ENCODE measurements at regions of chr1 and their contacts with region 1.

Region 1: DNA sequence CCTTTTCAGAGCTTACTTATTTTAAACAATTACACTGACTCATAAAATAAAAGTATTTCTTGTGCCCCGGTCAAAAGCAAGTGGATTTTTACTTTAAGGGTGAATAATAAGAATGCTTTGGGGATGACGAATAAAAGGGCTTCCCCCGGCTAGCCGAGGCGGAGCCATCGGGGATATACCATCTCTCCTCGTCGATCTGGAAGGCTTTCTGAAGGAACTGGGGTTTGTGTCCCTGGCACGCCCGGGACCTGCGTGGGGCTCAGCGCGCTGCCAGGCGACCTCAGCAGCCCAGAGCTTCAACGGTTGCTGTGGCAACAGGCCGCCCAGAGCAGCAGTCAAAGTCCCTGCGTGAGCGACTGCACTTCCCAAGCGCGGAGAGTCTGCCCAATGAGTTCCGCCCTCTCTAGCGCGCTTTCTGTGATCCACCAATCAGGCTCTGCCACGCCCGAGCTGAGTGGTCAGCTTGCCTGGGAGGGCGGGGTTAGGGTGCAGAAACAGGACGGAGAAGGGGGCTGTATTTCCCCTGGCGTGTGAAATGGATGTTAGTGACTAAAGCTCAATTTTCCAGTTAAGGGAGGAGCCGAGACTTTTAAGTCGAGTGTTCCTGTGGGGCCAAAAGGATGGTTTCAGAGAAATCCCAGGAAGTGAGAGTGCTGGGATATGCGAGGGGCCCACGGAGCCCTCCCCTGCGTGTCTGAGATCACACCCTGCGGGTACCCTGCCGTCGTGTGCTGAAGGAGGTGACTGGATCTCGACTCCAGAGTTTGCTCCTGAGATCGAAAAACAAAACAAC is 33.0 kb upstream of the MGST3 start:
- ATAC-seq: peak; percentile 96 to 100 (median 99)
- H3K4me3 ChIP-seq: peak overlapping the region; percentile 41 to 54 (median 46)
- H3K27ac ChIP-seq: peak overlapping the region; percentile 52 to 53
- H3K4me1 ChIP-seq: peaks cover 4 to 9% of the 10 kb centered on the region in 2 donors

Region 2: DNA sequence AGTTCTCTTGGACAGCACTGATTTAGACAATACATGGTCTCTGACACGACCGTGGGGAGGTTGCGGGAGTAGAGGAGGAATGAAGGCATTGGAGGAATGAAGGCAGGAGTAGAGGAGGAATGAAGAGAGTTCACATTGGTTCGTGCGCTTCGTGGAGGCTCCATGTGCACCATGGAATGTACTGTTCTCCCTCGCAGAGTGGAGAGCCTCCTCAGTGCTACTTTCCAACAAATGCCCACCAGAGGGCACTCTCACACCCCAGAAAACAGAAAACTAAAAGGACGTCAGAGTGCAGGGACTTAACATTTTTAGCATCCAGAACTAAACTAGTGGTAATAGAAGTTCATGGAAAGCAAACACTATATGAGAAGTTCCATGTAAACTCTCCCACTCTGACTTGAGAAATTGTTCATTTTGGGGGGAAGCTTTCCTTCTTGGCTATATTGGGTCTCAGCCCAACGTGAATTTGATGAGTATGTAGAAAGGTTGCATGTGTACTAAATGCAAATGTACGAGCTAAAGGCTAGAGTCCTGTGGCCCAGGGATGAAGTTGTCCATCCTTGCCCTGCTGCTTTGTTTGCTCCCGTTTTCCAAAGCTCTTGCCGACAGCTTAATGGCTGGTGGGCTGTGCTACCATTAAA is 453.2 kb before region 1 on chr1:
- in situ Hi-C with region 1: loop called in 4 of 9 experiments (anchors 25 kb)
- ATAC-seq: peak; percentile 83 to 100 (median 90)
- H3K4me3 ChIP-seq: no peak overlapping the region
- H3K27ac ChIP-seq: no peak overlapping the region
- H3K4me1 ChIP-seq: no peaks in the 10 kb centered on the region

Region 3: DNA sequence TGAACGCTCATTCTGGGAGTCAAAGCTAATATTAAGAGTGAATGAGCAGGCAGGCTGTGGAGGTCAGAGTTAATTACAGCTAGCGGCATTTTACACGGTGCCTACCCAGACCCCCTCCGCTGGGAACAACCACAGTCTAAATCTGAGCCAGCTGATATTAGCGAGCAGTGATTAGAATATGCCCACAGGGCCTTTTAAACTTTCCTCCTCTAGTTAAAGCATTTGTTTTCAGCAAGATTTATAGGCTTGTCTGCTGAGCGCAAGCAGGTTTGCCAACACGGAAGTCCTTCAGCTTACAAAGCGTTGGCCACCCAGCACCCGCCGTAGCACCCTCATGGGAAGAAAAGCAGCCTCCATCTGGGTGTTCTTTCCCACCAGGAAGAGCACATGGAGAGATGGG is 313.6 kb before region 1 on chr1:
- in situ Hi-C with region 1: no loop called
- ATAC-seq: peak in 1 of 8 experiments; percentile 35
- H3K4me3 ChIP-seq: no peak overlapping the region
- H3K27ac ChIP-seq: no peak overlapping the region
- H3K4me1 ChIP-seq: peaks cover 40 to 46% of the 10 kb centered on the region in 2 donors

Region 4: DNA sequence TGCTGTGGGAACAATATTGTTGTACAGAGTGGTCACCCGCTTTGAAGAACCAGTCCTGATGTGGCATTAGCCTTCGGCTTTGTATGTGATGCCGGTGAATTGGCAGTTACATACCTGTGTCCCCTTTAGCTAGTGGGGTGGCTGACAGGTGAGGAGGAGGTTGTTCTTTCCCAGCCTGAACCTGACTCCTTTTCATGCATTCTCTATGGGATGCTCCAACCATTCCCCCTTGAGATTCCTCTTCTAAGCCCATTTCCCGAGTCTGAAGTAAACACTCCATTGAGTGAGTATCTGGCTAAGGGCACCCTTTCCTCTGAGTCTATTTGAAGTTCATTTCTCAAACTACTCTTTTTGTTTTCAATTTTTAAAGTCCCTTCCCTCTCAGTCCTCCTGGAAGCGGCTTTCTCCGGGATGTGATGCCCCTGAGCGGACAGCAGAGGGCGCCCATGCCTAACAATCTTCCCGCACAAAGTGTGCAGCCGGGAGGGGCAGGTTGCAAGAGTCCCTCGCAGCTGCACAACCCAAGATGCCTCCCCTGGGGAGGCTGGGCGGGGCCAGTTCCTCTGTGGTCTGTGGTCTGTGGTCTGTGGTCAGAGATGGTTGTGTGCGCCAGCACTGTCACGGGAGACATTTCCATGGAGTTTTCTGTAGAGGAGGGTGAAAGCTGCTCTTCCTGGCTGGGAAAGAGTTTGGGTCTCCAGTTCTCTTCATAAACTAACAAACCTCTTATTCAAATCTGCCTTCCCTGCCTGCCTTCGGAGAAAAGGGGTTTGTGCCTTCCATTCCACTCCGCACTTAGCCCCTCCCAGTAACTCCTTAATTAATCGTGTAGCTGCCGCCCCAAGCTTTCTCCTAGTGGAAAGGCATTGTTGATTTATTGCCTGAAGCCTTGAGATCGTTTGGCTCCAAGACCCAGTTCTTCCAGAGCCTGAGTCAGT is 205.2 kb before region 1 on chr1:
- in situ Hi-C with region 1: loop called in 7 of 9 experiments (anchors 5 to 25 kb)
- ATAC-seq: peak; percentile 96 to 100 (median 100)
- H3K4me3 ChIP-seq: peak overlapping the region; percentile 9 to 32 (median 23)
- H3K27ac ChIP-seq: no peak overlapping the region
- H3K4me1 ChIP-seq: peaks cover 3 to 4% of the 10 kb centered on the region in 2 donors

Region 5: GRCh38 chr1:165403835-165404482 is 194.1 kb before region 1 on chr1:
- in situ Hi-C with region 1: loop called in 8 of 9 experiments (anchors 5 to 25 kb)
- ATAC-seq: peak; percentile 53 to 83 (median 69)
- H3K4me3 ChIP-seq: no peak overlapping the region
- H3K27ac ChIP-seq: no peak overlapping the region
- H3K4me1 ChIP-seq: no peaks in the 10 kb centered on the region

Region 6: DNA sequence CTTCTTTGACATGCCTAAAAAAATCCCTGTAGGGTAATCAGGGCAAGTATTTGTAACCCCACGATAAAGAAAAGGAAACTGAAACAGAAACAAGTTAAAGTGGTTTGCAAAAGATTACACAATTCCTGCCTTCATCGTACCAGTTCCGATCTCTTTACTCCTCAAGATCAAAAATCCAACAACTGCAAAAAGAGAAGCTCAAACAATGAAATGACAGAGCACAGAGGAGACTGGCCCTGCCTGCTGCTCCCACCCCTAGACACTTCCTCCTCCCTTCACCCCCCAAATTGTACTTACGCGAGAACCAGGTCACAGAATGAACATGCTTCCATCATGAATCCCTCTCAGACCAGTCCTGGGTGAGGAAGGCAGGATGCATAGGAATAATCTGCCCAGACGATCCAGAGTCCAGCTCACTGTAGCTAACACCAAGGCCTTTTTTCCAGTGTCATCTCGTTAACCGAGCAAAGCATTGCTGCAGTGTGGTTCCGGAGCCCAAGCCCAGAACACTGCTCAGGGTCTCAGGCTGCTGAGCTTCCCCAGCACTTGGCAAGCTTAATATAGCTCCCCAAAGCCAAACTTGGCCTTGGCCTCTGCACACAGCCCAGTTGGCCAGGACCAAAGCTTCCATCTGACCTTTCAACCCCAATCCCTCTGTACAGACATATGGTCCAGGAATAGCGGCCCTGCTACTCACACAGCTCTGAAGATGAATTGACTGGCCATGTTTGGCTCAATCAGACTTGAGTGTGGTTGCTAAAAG is 173.4 kb before region 1 on chr1:
- in situ Hi-C with region 1: no loop called
- ATAC-seq: peak in 5 of 8 experiments; percentile 20 to 52 (median 51)
- H3K4me3 ChIP-seq: no peak overlapping the region
- H3K27ac ChIP-seq: peak overlapping the region in 1 of 2 donors; percentile 7
- H3K4me1 ChIP-seq: peaks cover 19 to 27% of the 10 kb centered on the region in 2 donors

Region 7: DNA sequence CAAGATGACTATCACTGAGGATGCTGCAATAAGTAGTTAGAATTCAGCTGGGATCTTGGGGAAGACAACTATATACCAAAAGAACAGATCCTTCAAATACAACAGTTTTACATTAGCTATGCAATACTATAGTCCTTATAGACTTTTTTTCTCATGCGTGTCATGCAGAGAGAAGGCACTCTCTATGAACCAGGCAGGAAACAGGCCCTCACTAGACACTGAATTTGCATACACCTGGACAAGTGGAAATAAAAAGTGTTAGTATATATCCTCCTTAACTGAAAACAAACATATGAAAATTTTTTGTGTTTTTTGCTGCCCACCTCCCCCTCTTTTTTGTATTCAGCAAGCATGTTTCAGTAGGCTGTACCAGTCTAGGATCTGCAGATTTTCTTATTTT is 140.7 kb after region 1 on chr1:
- in situ Hi-C with region 1: no loop called
- ATAC-seq: no peak
- H3K4me3 ChIP-seq: no peak overlapping the region
- H3K27ac ChIP-seq: no peak overlapping the region
- H3K4me1 ChIP-seq: no peaks in the 10 kb centered on the region

Region 8: GRCh38 chr1:165903672-165904071 is 305.6 kb after region 1 on chr1:
- in situ Hi-C with region 1: loop called in 4 of 9 experiments (anchors 10 to 25 kb)
- ATAC-seq: peak in 2 of 8 experiments; percentile 18 to 62
- H3K4me3 ChIP-seq: no peak overlapping the region
- H3K27ac ChIP-seq: no peak overlapping the region
- H3K4me1 ChIP-seq: no peaks in the 10 kb centered on the region

Measured in motor neuron (in vitro differentiated cells).